ENCODE measurements at regions of chr12 and their contacts with region 1.

Region 1: GRCh38 chr12:69059483-69060457 is 126.8 kb upstream of the CPM start:
- DNase-seq: no peak
- H3K4me3 ChIP-seq: no peak overlapping the region
- H3K27ac ChIP-seq: no peak overlapping the region
- H3K27me3 ChIP-seq: no peaks in the 10 kb centered on the region
- CTCF ChIP-seq: no peak

Region 2: GRCh38 chr12:68831272-68831671 is 228.5 kb before region 1 on chr12:
- intact Hi-C with region 1: loop called in 1 of 2 experiments (anchors 10 kb)
- DNase-seq: no peak
- H3K4me3 ChIP-seq: no peak overlapping the region
- H3K27ac ChIP-seq: peak overlapping the region in 4 of 59 donors; percentile 5 to 20 (median 12)
- H3K27me3 ChIP-seq: no peaks in the 10 kb centered on the region
- CTCF ChIP-seq: no peak

Region 3: GRCh38 chr12:68866950-68867349 is 192.8 kb before region 1 on chr12:
- intact Hi-C with region 1: loop called (anchors 10 kb)
- DNase-seq: no peak
- H3K4me3 ChIP-seq: no peak overlapping the region
- H3K27ac ChIP-seq: peak overlapping the region in 6 of 59 donors; percentile 30 to 71 (median 52)
- H3K27me3 ChIP-seq: no peaks in the 10 kb centered on the region
- CTCF ChIP-seq: no peak

Region 4: DNA sequence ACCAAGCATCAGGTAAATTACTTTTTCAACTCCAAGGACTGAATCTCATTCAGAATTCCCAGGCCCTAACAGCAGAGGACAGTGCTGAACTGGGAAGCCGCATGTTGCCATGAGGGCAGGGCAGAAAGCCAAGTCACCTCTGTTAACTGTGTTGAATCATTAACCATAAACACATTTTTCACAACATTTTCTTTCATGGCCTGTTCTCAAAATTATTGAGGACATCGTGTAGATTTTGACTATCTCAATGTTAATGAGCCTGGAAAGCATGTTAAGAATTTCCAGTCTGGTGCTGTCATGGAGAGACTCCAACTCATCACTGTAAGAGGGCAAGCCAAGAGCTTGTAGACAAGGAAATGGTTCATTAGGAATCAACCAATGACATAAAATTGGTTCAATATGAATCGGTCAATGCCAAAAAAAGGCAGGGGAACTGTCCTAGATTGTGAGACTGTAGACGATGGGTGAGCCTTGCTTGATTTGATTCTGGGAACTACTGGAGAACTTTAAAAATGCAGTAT is 160.5 kb before region 1 on chr12:
- intact Hi-C with region 1: loop called in 1 of 2 experiments (anchors 10 kb)
- DNase-seq: peak in 2 of 10 donors; percentile 19 to 34
- H3K4me3 ChIP-seq: no peak overlapping the region
- H3K27ac ChIP-seq: peak overlapping the region in 15 of 59 donors; percentile 0 to 50 (median 14)
- H3K27me3 ChIP-seq: no peaks in the 10 kb centered on the region
- CTCF ChIP-seq: peak in 45 of 56 donors; percentile 8 to 66 (median 39)

Region 5: DNA sequence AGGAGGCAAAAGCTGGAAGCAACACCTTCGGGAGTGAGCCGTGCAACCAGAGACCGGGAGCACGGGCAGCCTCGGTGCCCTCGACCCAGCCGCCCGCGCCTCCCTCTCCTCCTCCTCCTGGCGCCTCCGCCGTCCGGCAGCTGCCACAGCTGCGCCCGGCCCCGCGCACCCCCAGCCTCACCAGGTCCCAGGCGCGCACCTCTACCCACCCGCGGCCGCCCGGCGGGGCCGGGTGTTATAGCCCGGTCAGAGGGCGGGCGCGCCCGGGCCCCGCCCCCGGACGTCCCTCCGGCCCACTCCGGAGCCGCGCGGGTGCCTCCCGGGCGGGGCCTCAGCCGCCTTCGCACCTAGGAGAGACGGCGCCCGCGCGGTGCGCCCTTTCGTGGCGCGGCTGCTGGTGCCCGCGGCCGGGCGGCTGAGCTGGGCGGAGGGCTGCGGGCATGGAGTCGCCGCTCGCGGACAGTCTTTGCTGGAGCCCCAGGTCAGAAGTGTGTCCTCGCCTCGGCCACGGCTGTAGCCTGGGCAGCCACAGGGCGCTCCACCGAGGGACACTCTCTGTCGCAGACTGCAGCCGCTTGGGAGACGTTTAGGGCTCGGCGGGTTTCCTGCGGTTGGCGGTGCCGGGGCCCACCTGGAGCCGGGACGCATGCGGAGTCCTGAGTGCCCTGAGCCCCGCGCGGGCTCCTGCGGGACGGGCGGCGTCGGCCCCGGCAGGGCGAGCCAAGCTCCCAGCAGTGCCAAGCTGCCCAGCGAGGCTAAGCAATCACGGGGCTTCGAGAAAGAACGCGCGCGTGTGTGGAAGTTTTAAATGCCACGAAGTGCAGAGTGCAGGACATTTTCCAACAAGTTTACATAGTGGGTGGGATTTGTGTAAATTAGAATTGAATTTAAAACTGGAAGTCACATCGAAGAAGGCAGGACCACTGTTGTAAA is 126.5 kb before region 1 on chr12 and contains the start of gene CPM:
- intact Hi-C with region 1: loop called in 1 of 2 experiments (anchors 10 kb)
- DNase-seq: peak; percentile 12 to 86 (median 71)
- H3K4me3 ChIP-seq: peak within 1 kb of the TSS; percentile 48 to 93 (median 77)
- H3K27ac ChIP-seq: peak within 1 kb of the TSS in 58 of 59 donors; percentile 0 to 95 (median 84)
- H3K27me3 ChIP-seq: peaks cover 0 to 33% (median 6%) of the 10 kb centered on the region in 45 donors
- CTCF ChIP-seq: peak in 8 of 56 donors; percentile 4 to 44 (median 19)
- total RNA-seq, gene CPM: 9.4 to 89.6 (median 31.5) TPM

Region 6: DNA sequence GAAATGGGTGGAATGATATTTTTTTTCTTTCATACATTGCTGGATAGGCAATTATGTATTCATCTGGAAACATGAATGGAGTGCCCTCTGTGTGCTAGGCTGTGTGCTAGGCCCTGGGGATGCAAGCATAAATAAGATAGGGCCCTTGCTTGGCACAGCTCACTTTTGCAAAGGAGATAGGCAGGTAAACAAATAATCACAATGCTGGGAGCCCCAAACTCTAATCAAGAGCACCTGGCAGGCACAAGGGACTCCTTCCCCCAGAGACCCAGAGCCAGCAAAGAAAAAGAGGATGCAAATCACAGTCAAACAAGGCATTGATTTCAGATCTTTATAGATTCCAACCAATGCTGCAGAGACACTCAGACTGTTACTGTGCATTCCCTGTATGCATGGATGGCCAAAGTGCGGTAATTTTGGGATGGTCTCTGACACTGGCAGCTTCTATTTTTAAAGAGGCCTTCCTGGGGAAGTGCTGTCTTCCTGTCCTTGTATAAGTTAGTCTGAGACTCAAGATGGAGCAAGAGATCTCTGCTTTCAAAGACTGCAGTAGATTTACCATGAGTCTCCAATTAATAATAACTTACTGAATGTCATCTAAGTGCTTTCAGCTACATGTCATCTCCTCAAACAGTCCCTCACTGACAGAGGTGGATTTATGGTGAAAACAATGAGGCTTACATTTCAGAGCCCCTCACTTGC is 81.7 kb before region 1 on chr12:
- intact Hi-C with region 1: loop called in 1 of 2 experiments (anchors 10 kb)
- DNase-seq: no peak
- H3K4me3 ChIP-seq: peak overlapping the region in 5 of 59 donors; percentile 2 to 33 (median 18)
- H3K27ac ChIP-seq: peak overlapping the region; percentile 59 to 99 (median 92)
- H3K27me3 ChIP-seq: no peaks in the 10 kb centered on the region
- CTCF ChIP-seq: peak in 3 of 56 donors; percentile 16 to 31 (median 22)